GM12878 (cell line): ENCODE measurements at regions of chr19 and their contacts with region 1.

Region 1: GRCh38 chr19:56066152-56067023 is 54.7 kb downstream of the ZNF787 start:
- DNase-seq: no peak
- ATAC-seq: peak; percentile 87
- H3K4me3 ChIP-seq: peak overlapping the region; percentile 24; the same call in 1 of the 2 replicates
- H3K27ac ChIP-seq: no peak overlapping the region
- H3K4me1 ChIP-seq: no peaks in the 10 kb centered on the region
- H3K27me3 ChIP-seq: no peaks in the 10 kb centered on the region
- CTCF ChIP-seq: peak; percentile 85 to 94 (median 88)
- EP300 ChIP-seq: no peak
- POLR2A ChIP-seq: no peak
- RAD21 ChIP-seq: peak; percentile 71

Region 2: DNA sequence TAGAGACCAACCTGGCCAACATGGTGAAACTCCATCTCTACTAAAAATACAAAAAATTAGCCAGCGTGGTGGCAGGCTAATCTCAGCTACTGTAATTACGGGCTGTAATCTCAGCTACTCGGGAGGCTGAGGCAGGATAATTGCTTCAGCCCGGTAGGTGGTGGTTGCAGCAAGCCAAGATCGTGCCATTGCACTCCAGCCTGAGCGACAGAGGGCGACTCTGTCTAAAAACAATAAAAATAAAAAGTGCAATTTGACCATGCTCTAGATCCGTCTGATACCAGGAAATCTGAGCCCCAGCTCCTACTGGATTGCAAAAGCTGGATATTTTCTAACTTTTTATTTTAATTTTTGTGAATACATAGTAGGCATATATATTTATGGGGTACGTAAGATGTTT is 99.8 kb before region 1 on chr19:
- CTCF ChIA-PET with region 1: no interaction called
- POLR2A ChIA-PET with region 1: no interaction called
- RAD21 ChIA-PET with region 1: no interaction called
- SMC1A ChIA-PET with region 1: no interaction called
- in situ Hi-C with region 1: no loop called
- intact Hi-C with region 1: no loop called
- DNase-seq: no peak
- ATAC-seq: no peak
- H3K4me3 ChIP-seq: no peak overlapping the region
- H3K27ac ChIP-seq: no peak overlapping the region
- H3K4me1 ChIP-seq: no peaks in the 10 kb centered on the region
- H3K27me3 ChIP-seq: no peaks in the 10 kb centered on the region
- CTCF ChIP-seq: no peak
- EP300 ChIP-seq: no peak
- POLR2A ChIP-seq: no peak
- RAD21 ChIP-seq: no peak

Region 3: DNA sequence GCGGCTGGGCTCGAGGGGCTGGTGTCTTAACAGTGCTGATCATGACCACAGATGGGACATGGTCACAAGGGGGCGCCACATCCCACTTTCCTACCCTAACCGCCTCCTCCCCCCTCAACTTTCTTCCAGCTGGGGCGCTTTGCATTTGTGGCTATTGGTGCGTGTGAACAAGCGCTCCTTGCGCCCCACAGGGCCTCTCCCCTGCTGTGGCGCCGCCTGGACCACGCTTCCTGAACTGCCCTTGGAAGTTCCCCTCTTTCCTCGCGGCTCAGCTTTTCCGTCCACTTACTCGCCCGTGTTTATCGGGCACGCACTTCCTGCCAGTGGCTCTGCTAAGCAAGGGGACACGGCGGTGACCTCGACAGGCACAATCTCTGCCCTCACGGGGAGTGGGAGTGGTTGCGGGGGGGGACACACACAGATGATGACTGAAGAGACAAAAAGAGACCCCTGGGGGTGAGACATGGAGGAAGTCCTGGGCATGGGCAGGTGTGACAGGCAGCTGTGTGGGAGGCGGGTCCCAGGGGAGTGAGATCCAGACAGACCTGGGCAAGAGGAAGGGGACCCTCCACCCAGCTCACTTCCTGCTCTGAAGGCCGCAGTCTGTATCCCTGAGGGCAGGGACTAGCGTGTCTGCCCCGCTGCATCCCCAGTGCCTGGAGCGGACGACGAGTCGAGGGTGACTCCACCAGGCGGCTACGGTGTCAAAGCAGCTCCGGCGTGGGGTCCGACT is 14.4 kb after region 1 on chr19:
- CTCF ChIA-PET with region 1: interaction called, 55 read pairs
- POLR2A ChIA-PET with region 1: no interaction called
- RAD21 ChIA-PET with region 1: interaction called, 6 read pairs
- SMC1A ChIA-PET with region 1: interaction called, 8 read pairs
- in situ Hi-C with region 1: no loop called
- intact Hi-C with region 1: no loop called
- DNase-seq: peak; percentile 38
- ATAC-seq: peak; percentile 89
- H3K4me3 ChIP-seq: peak overlapping the region; percentile 61; the same call in 1 of the 2 replicates
- H3K27ac ChIP-seq: peak overlapping the region; percentile 3; the same call in 1 of the 2 replicates
- H3K4me1 ChIP-seq: peaks cover 5% of the 10 kb centered on the region; the same call in 1 of the 2 replicates
- H3K27me3 ChIP-seq: no peaks in the 10 kb centered on the region
- CTCF ChIP-seq: peak; percentile 64 to 69 (median 64)
- EP300 ChIP-seq: peak; percentile 57 to 58; a peak in 1 of 4 replicates
- POLR2A ChIP-seq: peak; percentile 62; the same call in 1 of the 2 replicates
- RAD21 ChIP-seq: peak; percentile 60

Region 4: GRCh38 chr19:56170261-56170660 is 103.9 kb after region 1 on chr19:
- CTCF ChIA-PET with region 1: interaction called, 53 read pairs
- POLR2A ChIA-PET with region 1: no interaction called
- RAD21 ChIA-PET with region 1: interaction called, 4 read pairs
- SMC1A ChIA-PET with region 1: interaction called, 10 read pairs
- in situ Hi-C with region 1: no loop called
- intact Hi-C with region 1: no loop called
- DNase-seq: no peak
- ATAC-seq: no peak
- H3K4me3 ChIP-seq: no peak overlapping the region
- H3K27ac ChIP-seq: no peak overlapping the region
- H3K4me1 ChIP-seq: no peaks in the 10 kb centered on the region
- H3K27me3 ChIP-seq: no peaks in the 10 kb centered on the region; a peak in 1 of 4 replicates
- CTCF ChIP-seq: no peak
- EP300 ChIP-seq: no peak
- POLR2A ChIP-seq: no peak
- RAD21 ChIP-seq: no peak

Region 5: DNA sequence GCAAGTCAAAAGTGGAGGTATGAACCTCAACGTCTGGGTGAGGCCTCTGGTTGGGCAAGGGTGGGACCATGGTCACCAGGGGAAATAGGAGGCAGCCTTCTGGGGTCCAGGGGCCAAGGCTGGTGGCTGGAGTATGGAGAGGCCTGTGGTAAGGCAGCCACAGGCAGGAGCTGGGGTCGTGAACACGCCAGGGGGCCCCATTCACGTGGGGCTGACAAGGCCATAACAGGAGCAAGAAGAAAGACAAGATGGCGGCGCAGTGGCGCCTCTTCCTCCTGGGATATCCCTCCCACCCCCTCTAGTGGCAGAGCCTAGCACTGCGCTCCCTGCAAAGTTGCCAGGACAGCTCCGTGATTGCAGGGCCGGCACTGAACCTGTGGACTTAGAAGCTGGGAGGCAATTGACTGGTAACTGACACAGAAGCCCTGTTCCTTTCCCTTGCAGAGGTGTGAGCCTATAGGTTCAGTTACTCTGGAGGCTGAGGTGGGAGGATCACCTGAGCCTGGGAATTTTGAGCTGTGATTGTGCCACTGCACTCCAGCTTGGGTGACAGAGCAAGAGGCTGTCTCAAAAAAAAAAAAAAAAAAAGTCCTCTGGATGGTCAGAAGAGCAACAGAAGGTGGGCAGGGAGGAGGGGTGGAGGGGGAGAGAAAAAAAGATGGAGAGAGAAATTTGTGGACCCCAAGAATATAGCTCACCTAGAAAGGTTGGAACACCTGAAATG is 186.5 kb after region 1 on chr19:
- CTCF ChIA-PET with region 1: interaction called, 42 read pairs
- POLR2A ChIA-PET with region 1: no interaction called
- RAD21 ChIA-PET with region 1: interaction called, 13 read pairs
- SMC1A ChIA-PET with region 1: interaction called, 9 read pairs
- in situ Hi-C with region 1: no loop called
- intact Hi-C with region 1: loop called (anchors 2 kb)
- DNase-seq: no peak
- ATAC-seq: peak; percentile 84
- H3K4me3 ChIP-seq: no peak overlapping the region
- H3K27ac ChIP-seq: no peak overlapping the region
- H3K4me1 ChIP-seq: no peaks in the 10 kb centered on the region
- H3K27me3 ChIP-seq: no peaks in the 10 kb centered on the region
- CTCF ChIP-seq: peak; percentile 61 to 86 (median 78)
- EP300 ChIP-seq: no peak
- POLR2A ChIP-seq: no peak
- RAD21 ChIP-seq: peak; percentile 56

Region 6: DNA sequence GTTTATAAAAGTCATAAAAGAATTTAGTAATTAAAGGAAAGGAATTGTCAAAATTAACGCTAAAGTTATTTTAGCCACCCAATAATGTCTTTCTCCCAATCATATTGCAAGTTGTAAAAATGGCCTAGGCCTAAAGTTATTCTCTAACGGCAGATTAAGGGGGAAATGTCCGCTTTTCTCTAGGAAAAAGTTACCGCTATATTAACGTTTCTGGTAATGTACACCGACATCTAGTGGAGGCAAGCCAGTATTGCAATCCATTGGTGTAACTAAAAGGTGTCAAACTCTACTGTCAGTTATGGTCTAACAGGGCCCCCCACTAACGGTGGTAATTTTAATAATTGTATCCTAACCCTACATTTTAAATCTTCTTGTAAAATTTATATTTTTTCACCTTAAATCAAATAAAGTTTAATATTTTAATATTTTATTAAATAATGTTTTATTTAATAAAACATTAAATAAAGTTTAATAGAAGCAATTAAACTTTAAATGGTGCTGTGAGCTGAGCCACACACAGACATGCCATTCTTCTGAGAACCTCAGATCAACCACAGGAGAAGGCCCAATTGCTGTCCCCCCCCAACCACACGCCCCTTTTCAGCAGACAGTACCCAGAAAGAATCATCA is 284.1 kb after region 1 on chr19:
- CTCF ChIA-PET with region 1: interaction called, 15 read pairs
- POLR2A ChIA-PET with region 1: no interaction called
- RAD21 ChIA-PET with region 1: interaction called, 4 read pairs
- SMC1A ChIA-PET with region 1: no interaction called
- in situ Hi-C with region 1: no loop called
- intact Hi-C with region 1: no loop called
- DNase-seq: peak; percentile 11
- ATAC-seq: peak; percentile 48; the same call in 2 of the 3 replicates
- H3K4me3 ChIP-seq: no peak overlapping the region
- H3K27ac ChIP-seq: no peak overlapping the region
- H3K4me1 ChIP-seq: no peaks in the 10 kb centered on the region
- H3K27me3 ChIP-seq: no peaks in the 10 kb centered on the region
- CTCF ChIP-seq: peak; percentile 74 to 84 (median 78); a peak in 5 of 6 replicates
- EP300 ChIP-seq: no peak
- POLR2A ChIP-seq: no peak
- RAD21 ChIP-seq: peak; percentile 53